ENCODE measurements at regions of chr10 and their contacts with region 1.

Region 1: DNA sequence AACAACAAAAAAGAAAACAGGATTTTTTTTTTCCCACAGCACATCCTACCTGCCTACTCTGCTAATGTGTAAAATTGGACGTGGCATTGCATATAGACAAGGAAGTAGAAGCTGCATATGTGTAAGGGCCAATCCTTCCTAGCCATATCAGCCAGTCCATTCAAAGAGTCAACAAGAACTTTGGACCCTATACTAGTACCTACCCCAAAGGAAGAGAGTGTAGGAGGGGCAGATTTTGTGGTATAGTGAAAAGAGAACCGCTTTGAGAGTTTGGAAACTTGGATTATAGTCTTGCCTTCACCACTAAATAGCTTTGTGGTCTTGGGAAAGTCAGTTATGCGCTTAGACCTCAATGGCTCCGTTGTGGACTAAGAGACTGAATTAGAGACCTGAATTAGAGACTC is 12.1 kb upstream of the MCU start:
- DNase-seq: no peak
- H3K4me3 ChIP-seq: no peak overlapping the region
- H3K27me3 ChIP-seq: no peaks in the 10 kb centered on the region
- CTCF ChIP-seq: no peak

Region 2: GRCh38 chr10:71270301-71271220 is 1409.3 kb before region 1 on chr10:
- CTCF ChIA-PET with region 1: no interaction called
- POLR2A ChIA-PET with region 1: no interaction called
- DNase-seq: no peak
- H3K4me3 ChIP-seq: no peak overlapping the region
- H3K27me3 ChIP-seq: no peaks in the 10 kb centered on the region
- CTCF ChIP-seq: peak; percentile 81

Region 3: GRCh38 chr10:72649291-72649690 is 30.5 kb before region 1 on chr10:
- CTCF ChIA-PET with region 1: no interaction called
- POLR2A ChIA-PET with region 1: interaction called, 11 read pairs
- DNase-seq: no peak
- H3K4me3 ChIP-seq: no peak overlapping the region
- H3K27me3 ChIP-seq: no peaks in the 10 kb centered on the region
- CTCF ChIP-seq: no peak

Measured in BJ (cell line).